Activated T-helper 1 cell treated with anti-CD3 and anti-CD28 coated beads, Interleukin-12 subunit alpha, Interleukin-12 subunit beta, Interleukin-2, Interleukin-4 antibody, amounts not matched to agents 30 ng/mL and 10 ng/mL and 1 ng/mL, durations not matched to agents 14 hours and 24 hours and 36 hours (primary cell): ENCODE measurements at regions of chr1 and their contacts with region 1.

Region 1: DNA sequence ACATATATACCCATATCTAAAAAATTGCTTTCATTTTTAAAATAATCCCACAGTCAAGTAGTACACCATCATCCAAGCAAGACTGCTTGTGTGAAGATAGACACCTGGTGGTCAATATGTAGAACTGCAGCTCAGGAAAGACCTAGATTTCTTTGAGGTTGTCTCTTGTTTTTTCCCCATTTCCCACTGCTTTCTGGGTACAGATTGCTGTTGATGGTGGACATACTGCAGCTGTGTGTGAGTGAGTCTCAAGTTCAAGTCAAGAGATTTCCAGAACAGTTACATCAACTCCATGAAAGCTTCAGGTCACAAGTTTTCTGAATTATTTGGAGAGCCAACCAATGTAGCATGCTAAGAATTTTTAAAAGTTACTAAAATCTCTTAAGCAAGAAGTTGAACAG is 306.4 kb downstream of the DUSP10 start:
- DNase-seq: no peak
- H3K4me3 Mint-ChIP-seq: no peak overlapping the region
- H3K27ac Mint-ChIP-seq: no peak overlapping the region
- H3K4me1 Mint-ChIP-seq: peaks cover 24% of the 10 kb centered on the region
- H3K27me3 Mint-ChIP-seq: peaks cover 2% of the 10 kb centered on the region

Region 2: DNA sequence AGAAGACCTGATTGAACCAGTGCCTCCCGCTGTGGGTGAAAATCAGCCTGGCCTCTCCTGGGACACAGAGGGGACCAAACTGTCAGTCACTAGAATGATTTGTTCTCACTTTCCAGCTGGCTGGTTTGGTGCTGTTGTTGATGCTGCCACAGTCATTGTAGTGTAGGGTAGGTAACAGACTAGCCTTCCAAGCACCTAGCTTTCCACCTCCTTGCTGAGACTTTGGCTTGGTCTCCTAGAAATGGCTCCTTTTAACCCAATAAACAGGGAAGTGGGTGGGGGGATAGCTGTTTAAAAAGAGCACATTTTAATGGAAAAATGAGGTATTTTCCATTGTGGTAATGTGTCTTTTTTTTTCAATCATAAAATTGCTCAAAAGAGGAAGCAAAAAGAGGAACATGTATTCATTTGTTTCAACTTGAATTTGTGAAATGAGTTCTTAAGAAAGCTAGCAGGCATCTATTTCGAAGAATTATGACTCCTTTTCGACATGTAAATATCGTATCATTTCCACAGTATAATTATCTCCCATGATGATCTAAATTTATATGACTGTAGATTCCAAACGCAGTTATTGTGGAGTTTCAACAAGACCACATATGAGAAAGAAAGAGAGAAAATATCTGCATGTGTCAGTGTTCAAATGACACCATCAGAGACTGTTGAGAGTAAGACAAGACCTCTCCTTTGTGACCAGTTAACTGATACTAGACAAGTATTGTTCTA is 366.2 kb before region 1 on chr1:
- intact Hi-C with region 1: loop called (anchors 1 kb)
- DNase-seq: no peak
- H3K4me3 Mint-ChIP-seq: no peak overlapping the region
- H3K27ac Mint-ChIP-seq: peak overlapping the region; percentile 77
- H3K4me1 Mint-ChIP-seq: peaks cover 12% of the 10 kb centered on the region
- H3K27me3 Mint-ChIP-seq: no peaks in the 10 kb centered on the region

Region 3: DNA sequence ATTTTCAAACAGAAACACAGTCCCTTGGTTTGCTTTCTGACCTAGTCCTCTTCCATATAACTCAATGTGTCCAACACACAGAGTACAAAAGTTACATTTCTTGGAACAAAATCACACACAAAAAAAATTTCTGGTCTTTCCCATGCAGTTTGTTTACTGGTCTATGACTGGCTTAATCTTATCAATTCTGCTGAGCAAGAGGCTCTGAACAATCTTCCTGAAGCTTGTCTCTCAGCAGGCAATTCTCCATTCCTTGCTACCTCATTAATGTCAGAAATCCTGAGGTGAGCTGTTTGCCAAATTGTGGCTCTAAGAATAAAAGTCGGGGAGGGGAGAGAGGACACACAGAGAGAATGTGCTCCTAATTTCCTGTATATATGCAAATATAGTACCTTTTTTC is 132.7 kb before region 1 on chr1:
- intact Hi-C with region 1: no loop called
- DNase-seq: no peak
- H3K4me3 Mint-ChIP-seq: no peak overlapping the region
- H3K27ac Mint-ChIP-seq: no peak overlapping the region
- H3K4me1 Mint-ChIP-seq: no peaks in the 10 kb centered on the region
- H3K27me3 Mint-ChIP-seq: peaks cover 8% of the 10 kb centered on the region

Region 4: GRCh38 chr1:221708987-221709386 is 273.5 kb after region 1 on chr1:
- intact Hi-C with region 1: loop called (anchors 1 kb)
- DNase-seq: peak; percentile 50
- H3K4me3 Mint-ChIP-seq: no peak overlapping the region
- H3K27ac Mint-ChIP-seq: peak overlapping the region; percentile 92
- H3K4me1 Mint-ChIP-seq: peaks cover 78% of the 10 kb centered on the region
- H3K27me3 Mint-ChIP-seq: no peaks in the 10 kb centered on the region

Region 5: GRCh38 chr1:221794079-221794670 is 358.7 kb after region 1 on chr1:
- intact Hi-C with region 1: loop called (anchors 1 kb)
- DNase-seq: peak; percentile 32
- H3K4me3 Mint-ChIP-seq: peak overlapping the region; percentile 35
- H3K27ac Mint-ChIP-seq: peak overlapping the region; percentile 91
- H3K4me1 Mint-ChIP-seq: peaks cover 41% of the 10 kb centered on the region
- H3K27me3 Mint-ChIP-seq: no peaks in the 10 kb centered on the region

Region 6: DNA sequence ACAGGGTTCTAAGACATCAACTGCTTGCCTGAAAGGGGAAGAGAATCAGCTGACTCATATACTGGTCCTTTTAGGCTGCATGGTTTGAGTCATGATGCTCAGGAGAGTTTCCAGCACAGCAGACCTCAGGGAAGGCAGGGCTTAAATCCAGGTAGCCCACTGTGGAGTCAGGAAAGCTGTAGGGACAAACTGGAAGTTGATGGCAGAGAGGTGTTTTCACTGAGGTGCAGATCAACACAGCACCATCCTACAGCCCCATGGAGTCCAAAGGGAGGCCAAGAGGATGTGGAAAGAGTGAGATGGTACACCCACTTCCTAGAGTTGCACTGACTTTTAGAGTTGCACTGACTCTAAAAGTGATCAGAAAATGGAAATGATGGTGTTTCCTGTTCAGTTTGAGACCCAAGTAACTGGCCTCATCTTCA is 558.8 kb after region 1 on chr1:
- intact Hi-C with region 1: loop called (anchors 1 kb)
- DNase-seq: no peak
- H3K4me3 Mint-ChIP-seq: no peak overlapping the region
- H3K27ac Mint-ChIP-seq: peak overlapping the region; percentile 77
- H3K4me1 Mint-ChIP-seq: peaks cover 40% of the 10 kb centered on the region
- H3K27me3 Mint-ChIP-seq: peaks cover 2% of the 10 kb centered on the region

Region 7: DNA sequence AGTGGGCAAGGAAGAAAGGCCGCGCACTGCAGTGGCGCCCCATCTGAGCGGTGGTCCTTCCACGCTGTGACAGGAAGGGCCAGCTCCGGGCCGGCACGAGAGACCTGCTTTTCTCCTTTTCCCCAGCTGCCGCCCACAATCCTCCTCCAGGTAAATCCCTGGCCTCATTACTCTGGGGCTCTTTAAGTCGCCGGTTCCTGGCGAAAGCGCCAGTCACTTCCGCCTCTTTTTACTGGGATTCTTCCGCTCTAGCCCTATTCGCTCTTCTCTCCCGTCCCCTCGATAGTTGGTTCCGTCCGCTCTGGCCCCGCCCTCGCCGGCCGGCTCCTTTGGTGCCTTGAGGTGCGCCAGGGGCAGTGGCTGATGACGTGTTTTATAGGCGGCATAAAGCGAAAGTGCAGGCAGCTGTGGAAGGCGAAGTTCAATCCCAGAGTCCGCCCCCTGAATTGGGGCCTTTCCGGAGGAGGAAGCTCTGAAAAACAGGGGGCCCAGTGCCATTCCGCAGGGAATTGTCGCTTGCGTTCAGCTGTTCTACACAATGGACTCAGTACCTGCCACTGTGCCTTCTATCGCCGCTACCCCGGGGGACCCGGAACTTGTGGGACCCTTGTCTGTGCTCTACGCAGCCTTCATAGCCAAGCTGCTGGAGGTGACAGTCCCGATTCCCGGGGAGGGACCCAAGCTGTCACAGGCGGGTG is 1208.6 kb after region 1 on chr1:
- intact Hi-C with region 1: loop called (anchors 5 kb)
- DNase-seq: peak; percentile 98
- H3K4me3 Mint-ChIP-seq: peak overlapping the region; percentile 99
- H3K27ac Mint-ChIP-seq: peak overlapping the region; percentile 97
- H3K4me1 Mint-ChIP-seq: peaks cover 33% of the 10 kb centered on the region
- H3K27me3 Mint-ChIP-seq: no peaks in the 10 kb centered on the region